Mucosa of descending colon (tissue), 3 donors: ENCODE measurements at regions of chr1 and their contacts with region 1.

Region 1: DNA sequence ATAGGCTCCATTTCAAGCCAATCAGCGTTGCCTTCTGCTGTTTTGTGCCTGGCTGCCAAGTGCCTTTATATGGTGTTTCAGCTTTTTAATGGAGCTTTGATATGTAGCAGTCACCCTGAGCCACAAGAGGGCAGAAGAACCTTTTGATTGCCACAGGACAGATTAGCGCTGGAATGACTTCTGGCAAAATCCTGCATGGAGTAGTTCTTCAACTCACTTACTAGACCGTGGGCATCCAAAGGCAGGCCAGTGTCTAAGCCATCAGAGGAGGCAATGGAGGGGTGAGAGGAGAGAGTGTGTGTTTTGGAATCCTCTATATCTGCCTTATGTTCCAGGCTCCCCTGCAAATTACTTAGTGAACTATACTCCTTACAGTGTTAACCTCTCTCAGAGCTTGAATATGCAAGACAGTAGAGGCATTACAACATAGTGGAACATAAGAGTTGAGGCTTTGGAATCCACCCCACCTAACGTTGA is 56.2 kb downstream of the ST3GAL3 start:
- DNase-seq: peak in 1 of 3 donors; percentile 88
- ATAC-seq: peak; percentile 96
- H3K4me3 ChIP-seq: no peak overlapping the region
- H3K4me1 ChIP-seq: no peaks in the 10 kb centered on the region
- CTCF ChIP-seq: peak; percentile 57

Region 2: DNA sequence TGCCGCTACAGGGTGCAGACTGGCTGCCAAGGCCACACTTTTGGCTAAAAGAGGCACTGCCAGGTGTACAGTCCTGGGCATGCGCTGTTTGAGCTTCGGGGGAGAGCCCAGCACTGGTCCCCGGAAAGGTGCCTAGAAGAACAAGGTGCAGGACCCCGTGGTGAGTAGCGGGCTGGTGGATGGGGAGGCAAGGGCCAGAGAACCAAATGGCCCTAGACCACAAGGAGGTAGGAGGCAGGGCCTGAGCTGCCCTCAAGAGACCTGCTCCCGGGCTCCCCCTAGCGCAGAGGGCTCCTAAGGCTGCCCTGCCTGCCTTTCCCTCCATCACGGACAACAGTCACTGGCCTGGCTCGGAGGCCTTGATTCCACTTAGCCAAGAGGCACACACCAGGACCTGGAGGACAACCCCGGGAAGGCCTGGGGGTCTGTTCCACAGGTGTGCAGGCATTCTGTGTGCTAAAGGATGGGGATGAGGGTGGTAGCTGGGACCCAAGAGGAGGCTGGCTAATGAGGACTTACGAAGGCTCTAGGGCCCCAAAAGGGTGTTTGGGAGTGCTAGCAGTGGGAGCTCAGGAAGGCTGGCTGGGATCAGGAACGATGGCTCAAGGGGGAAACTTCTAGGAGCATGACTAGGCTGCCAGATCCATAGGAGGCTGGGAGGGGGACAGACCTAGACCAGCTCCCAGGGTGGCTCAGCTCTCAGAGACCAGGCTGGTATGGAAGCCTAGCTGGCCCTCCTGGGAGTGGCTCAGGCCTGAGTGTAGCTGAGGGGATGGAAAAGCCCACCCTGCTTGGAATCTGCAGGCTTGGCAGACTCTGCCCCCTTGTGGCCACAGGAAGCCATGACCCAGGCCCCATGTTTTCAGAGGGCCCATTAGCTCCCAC is 170.8 kb after region 1 on chr1:
- intact Hi-C with region 1: loop called (anchors 2 kb)
- DNase-seq: peak; percentile 82 to 88 (median 85)
- ATAC-seq: peak; percentile 72
- H3K4me3 ChIP-seq: no peak overlapping the region
- H3K4me1 ChIP-seq: peaks cover 20% of the 10 kb centered on the region
- CTCF ChIP-seq: peak; percentile 69

Region 3: GRCh38 chr1:44019466-44019948 is 256.0 kb after region 1 on chr1:
- intact Hi-C with region 1: no loop called
- DNase-seq: no peak
- ATAC-seq: no peak
- H3K4me3 ChIP-seq: no peak overlapping the region
- H3K4me1 ChIP-seq: peaks cover 3% of the 10 kb centered on the region
- CTCF ChIP-seq: no peak

Region 4: GRCh38 chr1:45303582-45304310 is 1540.2 kb after region 1 on chr1:
- intact Hi-C with region 1: no loop called
- DNase-seq: peak; percentile 99 to 100 (median 99)
- ATAC-seq: peak; percentile 96
- H3K4me3 ChIP-seq: peak overlapping the region; percentile 49
- H3K4me1 ChIP-seq: peaks cover 11% of the 10 kb centered on the region
- CTCF ChIP-seq: peak; percentile 61